MCF 10A (cell line): ENCODE measurements at regions of chr9 and their contacts with region 1.

Region 1: DNA sequence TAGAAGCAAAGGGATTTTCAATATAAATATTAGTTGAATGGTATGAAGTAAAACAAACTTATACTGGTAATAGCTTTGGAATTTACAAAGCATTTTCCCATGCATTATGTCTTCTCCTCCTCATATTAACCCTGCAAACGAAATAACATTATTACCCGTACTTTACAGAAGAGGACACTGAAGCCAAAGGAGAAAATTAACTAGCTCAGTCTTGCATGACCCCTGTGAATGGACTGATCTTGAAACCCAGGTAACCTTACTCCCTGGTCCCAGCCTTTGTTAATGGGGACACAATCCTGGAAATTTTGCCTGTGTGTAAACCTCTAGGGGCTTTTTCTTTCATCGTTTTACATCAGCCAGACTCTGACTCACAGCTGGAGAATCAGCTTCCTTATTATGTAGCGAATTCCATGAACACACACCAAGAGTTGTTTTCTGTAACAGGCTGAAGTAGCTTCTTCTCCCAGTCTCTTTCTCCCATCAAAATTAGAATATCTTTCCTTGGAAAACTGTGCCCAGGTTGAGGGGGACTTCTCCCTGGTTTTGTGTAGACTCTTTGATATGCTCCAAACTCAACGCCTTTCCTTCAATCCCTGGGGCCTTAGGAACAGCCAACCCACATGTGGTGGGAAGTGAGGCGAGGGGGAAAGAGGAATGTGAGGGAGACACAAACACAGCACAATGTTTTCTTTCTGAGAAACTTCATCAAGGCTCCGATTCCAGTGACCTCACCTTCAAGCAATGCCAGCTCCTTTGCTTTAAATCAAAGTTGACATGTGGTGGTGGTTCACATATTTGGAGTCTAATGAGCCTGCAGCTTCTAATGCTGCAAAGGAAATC is 480.9 kb upstream of the PAPPA start:
- DNase-seq: peak; percentile 91
- H3K4me3 Mint-ChIP-seq: no peak overlapping the region
- H3K27ac Mint-ChIP-seq: peak overlapping the region; percentile 99
- H3K4me1 Mint-ChIP-seq: peaks cover 52% of the 10 kb centered on the region
- H3K27me3 Mint-ChIP-seq: no peaks in the 10 kb centered on the region
- CTCF ChIP-seq: no peak

Region 2: DNA sequence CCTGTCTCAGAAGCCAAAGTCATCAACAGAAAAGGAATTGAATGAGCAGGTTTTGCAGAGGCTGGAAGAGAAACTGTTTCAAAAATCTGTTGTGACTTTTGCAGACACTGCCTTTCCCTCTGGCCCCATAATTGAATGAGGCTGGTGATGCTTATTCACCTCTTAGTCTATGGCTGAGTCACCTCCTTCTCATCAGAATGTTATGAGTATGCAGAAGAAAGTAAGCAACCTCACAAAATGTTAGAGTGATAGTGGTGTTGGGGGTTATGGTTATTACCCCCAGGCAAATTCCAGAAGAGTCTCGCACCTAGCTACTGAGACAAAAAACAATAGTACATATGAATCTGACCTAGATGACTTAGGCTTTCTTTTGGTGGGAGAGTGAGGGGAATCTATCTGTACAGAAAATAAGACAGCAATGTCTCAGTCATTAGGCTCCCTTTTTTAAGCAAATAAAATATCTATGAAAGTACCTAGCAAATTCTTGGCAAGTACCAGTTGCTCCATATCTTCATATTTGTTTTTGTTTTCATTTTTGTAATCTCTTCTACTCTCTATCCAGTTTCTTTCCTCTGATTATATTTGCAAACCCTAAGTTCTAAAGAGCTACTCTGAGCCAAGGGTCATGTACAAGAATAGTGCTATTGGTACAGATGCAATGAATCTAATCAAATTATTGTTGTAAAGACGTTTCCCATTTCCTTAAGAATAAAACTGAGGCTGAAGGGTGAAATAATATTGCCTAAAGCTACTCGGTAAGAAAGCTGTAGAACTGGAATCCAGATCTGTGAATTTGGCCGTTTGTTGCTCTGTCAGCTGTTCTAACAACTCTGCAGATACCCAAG is 56.7 kb before region 1 on chr9:
- CTCF ChIA-PET with region 1: no interaction called
- POLR2A ChIA-PET with region 1: interaction called, 4 read pairs
- intact Hi-C with region 1: loop called (anchors 2 kb)
- DNase-seq: peak; percentile 79
- H3K4me3 Mint-ChIP-seq: no peak overlapping the region
- H3K27ac Mint-ChIP-seq: peak overlapping the region; percentile 61
- H3K4me1 Mint-ChIP-seq: peaks cover 25% of the 10 kb centered on the region
- H3K27me3 Mint-ChIP-seq: no peaks in the 10 kb centered on the region
- CTCF ChIP-seq: no peak